Naive thymus-derived CD4-positive, alpha-beta T cell (primary cell): ENCODE measurements at regions of chr7 and their contacts with region 1.

Region 1: DNA sequence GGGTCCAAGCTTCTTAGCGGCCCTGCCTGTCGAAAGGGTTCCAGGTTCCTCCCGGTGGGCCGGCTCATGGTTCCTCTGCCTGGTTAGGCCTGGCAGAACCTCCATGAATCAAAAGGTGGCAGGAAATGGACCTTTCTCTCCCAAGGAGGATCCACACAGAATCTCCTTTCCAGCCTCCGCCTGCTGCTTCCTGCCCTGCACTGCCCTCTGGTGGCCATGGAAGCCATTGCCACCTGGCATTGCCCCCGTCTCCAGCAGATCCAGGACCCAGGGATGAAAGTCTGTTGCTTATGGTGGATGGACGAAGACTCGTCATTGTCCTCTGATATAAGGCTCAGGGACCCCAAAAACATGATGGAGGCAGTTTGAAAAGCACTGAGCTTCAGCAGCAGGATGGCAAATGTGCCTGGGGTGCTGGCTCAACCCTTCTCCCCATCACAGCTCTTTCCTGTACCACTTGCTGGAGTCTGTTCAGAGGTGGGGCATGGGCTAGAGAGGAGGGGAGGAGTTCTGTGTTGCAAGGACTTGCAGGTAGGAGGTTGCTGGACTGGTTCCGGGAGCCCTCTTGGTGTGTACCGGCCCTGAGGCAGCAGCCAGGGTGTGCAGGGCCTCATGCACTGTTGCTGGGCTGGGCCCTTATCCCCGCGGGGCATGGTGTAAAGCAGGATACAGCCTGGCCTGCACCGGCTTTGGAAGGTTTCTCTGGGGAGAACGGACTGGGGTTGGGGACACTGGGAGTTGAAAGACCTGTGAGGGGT is 11.3 kb upstream of the INMT start:
- DNase-seq: peak; percentile 55 to 85 (median 72)
- ATAC-seq: peak; percentile 74
- H3K4me3 ChIP-seq: no peak overlapping the region
- H3K4me3 Mint-ChIP-seq: peak overlapping the region in 3 of 10 donors; percentile 18 to 42 (median 35)
- H3K27ac ChIP-seq: no peak overlapping the region
- H3K27ac Mint-ChIP-seq: peak overlapping the region in 7 of 9 donors; percentile 47 to 95 (median 73)
- H3K4me1 ChIP-seq: peaks cover 27 to 41% of the 10 kb centered on the region in 2 donors
- H3K4me1 Mint-ChIP-seq: peaks cover 22 to 44% (median 39%) of the 10 kb centered on the region in 7 donors
- H3K27me3 ChIP-seq: no peaks in the 10 kb centered on the region
- H3K27me3 Mint-ChIP-seq: peaks cover 0 to 5% (median 0%) of the 10 kb centered on the region in 5 donors

Region 2: GRCh38 chr7:30510124-30511075 is 230.2 kb before region 1 on chr7:
- CTCF ChIA-PET with region 1: interaction called, 6 read pairs
- POLR2A ChIA-PET with region 1: no interaction called
- intact Hi-C with region 1: loop called (anchors 1 kb)
- DNase-seq: peak in 4 of 9 donors; percentile 14 to 29 (median 25)
- ATAC-seq: peak; percentile 78
- H3K4me3 ChIP-seq: no peak overlapping the region
- H3K4me3 Mint-ChIP-seq: no peak overlapping the region
- H3K27ac ChIP-seq: no peak overlapping the region
- H3K27ac Mint-ChIP-seq: no peak overlapping the region
- H3K4me1 ChIP-seq: no peaks in the 10 kb centered on the region
- H3K4me1 Mint-ChIP-seq: peaks cover 0 to 7% (median 6%) of the 10 kb centered on the region in 7 donors
- H3K27me3 ChIP-seq: no peaks in the 10 kb centered on the region
- H3K27me3 Mint-ChIP-seq: no peaks in the 10 kb centered on the region

Region 3: GRCh38 chr7:30594549-30595435 is 145.8 kb before region 1 on chr7 and contains the start of gene GARS1:
- CTCF ChIA-PET with region 1: no interaction called
- POLR2A ChIA-PET with region 1: interaction called, 9 read pairs
- intact Hi-C with region 1: loop called (anchors 1 kb)
- DNase-seq: peak; percentile 85 to 92 (median 90)
- ATAC-seq: peak; percentile 91
- H3K4me3 ChIP-seq: peak within 1 kb of the TSS; percentile 62
- H3K4me3 Mint-ChIP-seq: peak within 1 kb of the TSS; percentile 91 to 100 (median 99)
- H3K27ac ChIP-seq: peak within 1 kb of the TSS; percentile 91
- H3K27ac Mint-ChIP-seq: peak within 1 kb of the TSS; percentile 97 to 100 (median 99)
- H3K4me1 ChIP-seq: peaks cover 3 to 22% of the 10 kb centered on the region in 2 donors
- H3K4me1 Mint-ChIP-seq: peaks cover 52 to 88% (median 77%) of the 10 kb centered on the region in 7 donors
- H3K27me3 ChIP-seq: no peaks in the 10 kb centered on the region
- H3K27me3 Mint-ChIP-seq: no peaks in the 10 kb centered on the region
- total RNA-seq, gene GARS1: 73.8 to 143 (median 75.8) TPM

Region 4: DNA sequence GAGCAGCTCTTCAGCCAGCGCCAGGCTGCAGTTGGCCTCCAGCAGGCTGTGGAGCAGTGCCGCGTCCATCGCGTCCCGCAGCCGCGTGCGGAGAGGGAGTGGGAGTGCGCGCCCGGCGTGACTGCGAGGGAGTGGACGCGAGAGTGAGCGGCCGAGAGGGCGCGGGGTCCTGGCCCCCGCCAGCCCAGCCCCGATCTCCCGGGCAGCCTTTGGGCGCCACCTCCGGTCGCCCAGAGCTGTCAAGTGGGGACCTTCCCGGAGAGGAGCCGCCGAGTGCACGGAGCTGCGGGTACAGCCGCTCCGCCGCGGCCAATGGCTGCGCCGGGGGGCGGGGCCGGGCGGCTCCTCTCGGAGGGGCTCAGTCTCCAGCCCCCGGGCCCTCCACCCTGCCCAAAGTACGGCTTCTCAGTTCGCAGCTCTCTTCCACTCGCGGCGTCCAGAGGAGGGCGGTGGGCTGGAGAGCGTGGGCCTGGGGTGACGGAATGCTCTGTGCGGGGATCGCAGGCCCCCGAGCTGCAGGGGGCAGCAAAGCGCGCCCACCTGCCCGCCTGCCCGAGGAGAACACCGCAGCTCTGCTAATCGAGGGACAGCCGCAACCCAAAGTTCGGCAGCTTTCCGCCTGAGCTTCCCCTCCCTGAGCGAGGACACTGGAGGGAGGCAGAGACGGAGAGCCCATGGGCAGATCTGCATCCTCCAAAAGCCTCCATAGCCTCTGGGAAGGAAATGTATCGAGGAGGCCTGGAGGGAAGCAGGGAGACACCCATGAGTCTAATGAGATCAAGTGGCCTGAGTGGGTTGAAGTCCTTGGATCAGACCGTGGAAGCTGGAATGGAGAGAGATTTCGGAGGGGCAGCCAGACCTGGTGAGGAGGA is 58.2 kb before region 1 on chr7 and contains the start of gene CRHR2:
- CTCF ChIA-PET with region 1: interaction called, 38 read pairs
- POLR2A ChIA-PET with region 1: no interaction called
- intact Hi-C with region 1: loop called (anchors 1 kb)
- DNase-seq: peak in 8 of 9 donors; percentile 13 to 40 (median 33)
- ATAC-seq: peak; percentile 75
- H3K4me3 ChIP-seq: peak within 1 kb of the TSS; percentile 41
- H3K4me3 Mint-ChIP-seq: peak within 1 kb of the TSS; percentile 78 to 87 (median 81)
- H3K27ac ChIP-seq: no peak within 1 kb of the TSS
- H3K27ac Mint-ChIP-seq: peak within 1 kb of the TSS in 1 of 9 donors; percentile 36
- H3K4me1 ChIP-seq: peaks cover 4 to 5% of the 10 kb centered on the region in 2 donors
- H3K4me1 Mint-ChIP-seq: peaks cover 6 to 15% (median 12%) of the 10 kb centered on the region in 7 donors
- H3K27me3 ChIP-seq: peaks cover 0 to 20% of the 10 kb centered on the region in 2 donors
- H3K27me3 Mint-ChIP-seq: peaks cover 51 to 73% (median 64%) of the 10 kb centered on the region in 5 donors
- total RNA-seq, gene CRHR2: not detected

Region 5: DNA sequence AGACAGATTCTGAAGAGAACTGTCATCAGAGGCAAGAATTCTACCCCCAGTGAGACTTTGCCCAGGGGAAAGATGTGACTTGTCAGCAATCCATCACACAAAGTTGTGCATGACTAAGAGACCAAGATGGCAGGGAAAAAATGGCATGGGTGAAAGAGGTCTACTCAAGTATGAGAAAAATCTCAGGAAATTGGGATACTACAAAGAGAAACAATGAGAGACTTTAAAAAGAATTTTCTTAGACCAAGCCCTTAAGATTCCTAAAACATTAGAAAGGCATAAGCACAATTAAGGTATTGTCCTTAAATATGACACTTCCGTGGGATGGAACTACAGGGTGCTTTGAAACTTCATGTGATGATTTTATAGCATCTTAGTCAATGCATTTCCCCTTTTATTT is 1375.2 kb after region 1 on chr7:
- CTCF ChIA-PET with region 1: no interaction called
- POLR2A ChIA-PET with region 1: no interaction called
- intact Hi-C with region 1: no loop called
- DNase-seq: no peak
- ATAC-seq: no peak
- H3K4me3 ChIP-seq: no peak overlapping the region
- H3K4me3 Mint-ChIP-seq: no peak overlapping the region
- H3K27ac ChIP-seq: no peak overlapping the region
- H3K27ac Mint-ChIP-seq: no peak overlapping the region
- H3K4me1 ChIP-seq: no peaks in the 10 kb centered on the region
- H3K4me1 Mint-ChIP-seq: no peaks in the 10 kb centered on the region
- H3K27me3 ChIP-seq: no peaks in the 10 kb centered on the region
- H3K27me3 Mint-ChIP-seq: no peaks in the 10 kb centered on the region